ENCODE measurements at regions of chr2 and their contacts with region 1.

Region 1: DNA sequence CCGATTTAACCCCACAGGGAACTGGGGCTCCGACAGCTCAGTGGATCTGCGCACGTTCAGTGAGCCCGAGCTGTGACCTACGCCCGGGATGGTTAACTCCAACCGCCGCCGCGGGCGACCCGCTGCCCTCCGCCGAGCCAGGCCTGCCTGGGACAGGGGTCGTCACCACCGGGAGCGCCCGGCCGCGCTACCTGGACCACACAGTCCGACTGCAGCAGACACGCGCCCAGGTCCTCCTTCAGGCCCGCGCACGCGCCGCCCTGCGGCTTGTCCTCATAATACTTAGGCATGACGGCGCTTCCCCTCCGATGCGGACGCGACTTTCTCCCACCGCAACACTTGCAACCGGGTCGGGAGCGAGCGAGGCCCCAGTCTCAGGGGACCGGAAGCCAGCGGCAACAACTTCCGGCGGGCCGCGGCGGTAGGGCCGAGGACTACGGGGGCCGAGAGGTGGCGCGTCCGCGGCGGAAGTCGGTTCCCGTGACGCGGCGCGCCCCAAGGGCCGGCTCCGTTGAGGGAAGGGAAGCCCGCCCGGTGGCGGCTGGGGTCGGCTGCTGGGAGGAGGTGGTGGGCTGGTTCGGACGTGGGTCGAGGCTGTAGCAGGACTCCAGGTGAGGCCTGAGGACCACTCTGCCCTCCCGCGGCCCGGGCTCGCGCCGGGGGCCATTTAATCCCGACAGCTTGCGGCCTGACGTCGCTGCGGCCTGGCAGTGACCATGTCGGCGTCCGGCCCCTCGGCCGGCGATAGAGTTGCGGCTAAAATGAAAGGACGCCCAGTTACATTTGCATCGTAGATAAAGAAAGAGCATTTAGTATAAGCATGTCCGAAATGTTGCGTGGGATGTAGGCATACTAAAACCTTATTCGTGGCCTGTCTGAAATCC is at the starts of genes COA5 and UNC50:
- DNase-seq: peak; percentile 92
- H3K4me3 ChIP-seq: peak within 1 kb of the TSS; percentile 95 to 100 (median 98)
- H3K27ac ChIP-seq: peak within 1 kb of the TSS; percentile 98
- H3K4me1 ChIP-seq: peaks cover 32% of the 10 kb centered on the region
- H3K27me3 ChIP-seq: no peaks in the 10 kb centered on the region
- CTCF ChIP-seq: no peak
- POLR2A ChIP-seq: peak; percentile 91
- total RNA-seq, gene COA5: 17.7 and 18.2 TPM in 2 replicates
- total RNA-seq, gene UNC50: 33.5 and 35.3 TPM in 2 replicates

Region 2: DNA sequence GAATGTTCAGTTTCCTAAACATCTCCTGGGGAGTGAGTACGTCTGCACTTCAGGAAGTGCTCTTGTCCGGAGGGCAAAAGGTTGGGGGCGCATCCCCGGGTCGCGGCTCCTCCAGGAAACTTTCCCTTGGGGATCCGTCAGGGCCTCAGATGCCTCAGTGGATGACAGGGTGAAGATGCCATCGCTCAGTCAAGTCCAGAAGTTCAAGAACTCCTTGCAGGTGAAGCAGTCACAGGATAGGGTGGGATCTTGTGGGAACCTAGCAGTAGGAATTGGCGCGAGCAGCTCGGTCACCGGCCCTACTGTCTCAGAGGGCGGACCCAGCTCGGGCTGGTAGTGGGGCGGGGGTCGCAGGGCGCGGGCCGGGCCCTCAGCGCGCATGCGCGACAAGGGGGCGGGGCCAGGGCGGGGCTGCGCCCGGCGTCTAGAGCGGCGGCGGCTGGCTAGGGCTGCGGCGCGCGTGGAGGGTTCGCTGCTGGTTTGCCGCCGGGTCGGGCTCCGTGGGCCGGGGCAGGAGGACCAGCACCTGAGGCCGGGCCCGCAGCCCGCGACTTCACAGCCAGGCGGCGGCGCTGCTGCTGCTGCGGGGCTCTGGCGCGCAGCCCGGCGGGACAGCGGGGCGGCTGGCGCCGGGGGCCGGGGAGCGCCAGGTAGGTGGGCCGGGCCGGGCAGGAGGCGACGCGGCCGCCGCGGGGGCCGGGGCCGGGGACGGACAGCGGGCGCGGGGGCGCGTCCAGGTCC is 163.8 kb before region 1 on chr2 and contains the start of gene INPP4A:
- CTCF ChIA-PET with region 1: no interaction called
- POLR2A ChIA-PET with region 1: no interaction called
- dilution Hi-C with region 1: no loop called
- intact Hi-C with region 1: no loop called
- DNase-seq: peak; percentile 81
- H3K4me3 ChIP-seq: peak within 1 kb of the TSS; percentile 43 to 68 (median 52)
- H3K27ac ChIP-seq: peak within 1 kb of the TSS; percentile 52
- H3K4me1 ChIP-seq: peaks cover 16% of the 10 kb centered on the region
- H3K27me3 ChIP-seq: no peaks in the 10 kb centered on the region
- CTCF ChIP-seq: no peak
- POLR2A ChIP-seq: peak; percentile 77
- total RNA-seq, gene INPP4A: 25.7 and 28.8 TPM in 2 replicates

Region 3: GRCh38 chr2:98505311-98505808 is 103.0 kb before region 1 on chr2:
- CTCF ChIA-PET with region 1: no interaction called
- POLR2A ChIA-PET with region 1: no interaction called
- dilution Hi-C with region 1: no loop called
- intact Hi-C with region 1: loop called (anchors 5 kb)
- DNase-seq: peak; percentile 34
- H3K4me3 ChIP-seq: no peak overlapping the region
- H3K27ac ChIP-seq: no peak overlapping the region
- H3K4me1 ChIP-seq: peaks cover 3% of the 10 kb centered on the region
- H3K27me3 ChIP-seq: no peaks in the 10 kb centered on the region
- CTCF ChIP-seq: no peak
- POLR2A ChIP-seq: no peak

Region 4: DNA sequence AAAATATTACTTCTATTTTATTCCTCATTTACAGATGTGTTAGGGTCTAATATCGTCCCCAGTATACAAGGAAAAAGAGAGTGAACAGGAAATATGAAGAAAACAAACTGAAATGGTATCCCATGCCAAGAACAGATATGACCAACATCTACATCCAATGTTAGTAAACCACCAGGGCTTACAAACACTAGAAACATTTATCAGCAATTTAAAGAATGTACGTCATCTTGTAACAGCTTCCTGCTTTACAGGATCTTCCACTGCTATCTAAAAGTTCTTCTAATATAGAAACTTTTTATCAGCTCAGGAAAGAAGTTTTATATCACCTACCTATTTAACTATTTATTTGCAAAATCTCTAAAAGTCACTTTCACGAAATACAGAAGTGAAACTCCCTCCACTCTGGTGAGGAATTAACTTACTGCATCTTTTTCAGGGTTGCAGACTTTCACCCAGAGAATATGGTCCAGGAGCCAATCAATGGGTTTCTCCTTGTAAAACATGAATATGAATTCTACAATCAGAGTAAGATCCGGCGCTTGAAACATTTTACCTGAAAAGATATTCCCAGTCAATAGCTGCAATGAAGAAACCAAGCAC is 35.2 kb after region 1 on chr2:
- CTCF ChIA-PET with region 1: no interaction called
- POLR2A ChIA-PET with region 1: no interaction called
- dilution Hi-C with region 1: no loop called
- intact Hi-C with region 1: no loop called
- DNase-seq: no peak
- H3K4me3 ChIP-seq: no peak overlapping the region
- H3K27ac ChIP-seq: no peak overlapping the region
- H3K4me1 ChIP-seq: no peaks in the 10 kb centered on the region
- H3K27me3 ChIP-seq: no peaks in the 10 kb centered on the region
- CTCF ChIP-seq: no peak
- POLR2A ChIP-seq: no peak

Measured in endothelial cell of umbilical vein (primary cell).